PC-9 (cell line): ENCODE measurements at regions of chr3 and their contacts with region 1.

Region 1: GRCh38 chr3:134260984-134261383 is 10.3 kb upstream of the RYK start:
- DNase-seq: peak; percentile 34 to 61
- H3K4me3 ChIP-seq: no peak overlapping the region
- H3K27ac ChIP-seq: 0 out of 2 replicates have a peak overlapping the region, but pooled peaks have one; percentile 21
- H3K4me1 ChIP-seq: peaks cover 18% of the 10 kb centered on the region
- H3K27me3 ChIP-seq: no peaks in the 10 kb centered on the region
- CTCF ChIP-seq: no peak

Region 2: DNA sequence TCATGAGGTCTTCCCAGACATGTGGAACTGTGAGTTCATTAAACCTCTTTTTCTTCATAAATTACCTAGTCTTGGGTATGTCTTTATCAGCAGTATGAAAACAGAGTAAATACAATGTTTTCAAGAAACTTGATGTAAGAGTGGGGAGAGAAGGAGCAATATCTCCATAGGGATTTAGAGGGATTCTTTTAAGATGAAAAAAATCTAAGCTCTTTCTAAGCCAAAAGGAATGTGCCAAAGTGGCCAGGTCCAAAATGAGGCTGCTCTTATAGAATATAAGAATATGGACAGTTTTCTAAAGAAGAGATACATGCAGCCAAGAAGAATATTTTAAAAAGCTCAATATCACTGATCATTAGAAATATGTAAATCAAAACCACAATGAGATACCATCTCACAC is 13.6 kb after region 1 on chr3:
- CTCF ChIA-PET with region 1: interaction called, 10 read pairs
- POLR2A ChIA-PET with region 1: no interaction called
- intact Hi-C with region 1: no loop called
- DNase-seq: no peak
- H3K4me3 ChIP-seq: no peak overlapping the region
- H3K27ac ChIP-seq: no peak overlapping the region
- H3K4me1 ChIP-seq: peaks cover 8% of the 10 kb centered on the region; the same call in 1 of the 2 replicates
- H3K27me3 ChIP-seq: no peaks in the 10 kb centered on the region; the same call in 1 of the 2 replicates
- CTCF ChIP-seq: no peak

Region 3: GRCh38 chr3:134336587-134336986 is 75.6 kb after region 1 on chr3:
- CTCF ChIA-PET with region 1: no interaction called
- POLR2A ChIA-PET with region 1: interaction called, 12 read pairs
- intact Hi-C with region 1: no loop called
- DNase-seq: peak; percentile 55 to 69
- H3K4me3 ChIP-seq: no peak overlapping the region
- H3K27ac ChIP-seq: peak overlapping the region; percentile 97
- H3K4me1 ChIP-seq: peaks cover 66% of the 10 kb centered on the region
- H3K27me3 ChIP-seq: no peaks in the 10 kb centered on the region
- CTCF ChIP-seq: no peak